WTC11 (cell line): ENCODE measurements at regions of chr2 and their contacts with region 1.

Region 1: DNA sequence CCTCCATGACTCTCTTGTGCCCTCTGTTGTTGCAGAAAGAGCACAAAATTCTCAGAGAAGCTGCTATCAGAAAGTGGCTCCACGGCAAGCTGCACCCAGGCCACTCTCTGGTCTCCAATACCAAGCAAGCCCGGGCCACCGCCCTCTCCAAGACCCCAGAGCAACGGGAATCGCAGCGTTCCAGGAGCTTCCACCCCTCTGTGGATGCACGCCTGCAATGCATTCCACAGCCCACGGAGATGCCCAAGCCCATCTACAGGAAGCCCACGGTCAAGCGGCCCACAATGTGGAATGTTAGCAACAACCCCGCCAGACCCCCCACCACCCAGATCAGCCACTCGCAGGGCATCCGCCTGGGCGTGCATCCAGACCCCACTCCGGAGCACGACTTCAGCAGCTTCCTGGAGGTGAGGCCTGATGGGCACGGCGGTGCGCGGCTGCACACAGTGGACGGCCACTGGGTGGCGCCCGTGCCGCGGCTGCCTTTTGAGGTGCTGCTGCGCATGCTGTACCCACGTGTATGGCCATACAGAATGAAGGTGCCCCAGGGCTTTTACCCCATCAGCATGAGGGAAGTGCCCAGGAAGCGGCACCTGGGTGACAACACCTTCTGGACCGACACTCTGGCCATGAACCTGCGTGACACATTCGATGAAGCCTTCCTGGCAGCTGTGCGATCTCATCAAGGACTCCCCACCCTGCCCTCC is 6.3 kb downstream of the ANKRD53 start:
- DNase-seq: peak; percentile 85
- ATAC-seq: peak; percentile 96
- H3K4me3 Mint-ChIP-seq: peak overlapping the region; percentile 54
- H3K27ac Mint-ChIP-seq: no peak overlapping the region
- H3K4me1 Mint-ChIP-seq: peaks cover 5% of the 10 kb centered on the region
- H3K27me3 Mint-ChIP-seq: peaks cover 14% of the 10 kb centered on the region
- CTCF ChIP-seq: peak; percentile 90

Region 2: GRCh38 chr2:70935468-70936164 is 49.1 kb before region 1 on chr2 and contains the start of gene ATP6V1B1:
- CTCF ChIA-PET with region 1: interaction called, 11 read pairs
- POLR2A ChIA-PET with region 1: no interaction called
- DNase-seq: peak; percentile 53
- ATAC-seq: peak; percentile 20
- H3K4me3 Mint-ChIP-seq: no peak within 1 kb of the TSS
- H3K27ac Mint-ChIP-seq: no peak within 1 kb of the TSS
- H3K4me1 Mint-ChIP-seq: peaks cover 25% of the 10 kb centered on the region
- H3K27me3 Mint-ChIP-seq: peaks cover 48% of the 10 kb centered on the region
- CTCF ChIP-seq: no peak
- total RNA-seq, gene ATP6V1B1: not detected in 3 replicates

Region 3: GRCh38 chr2:71000780-71001591 is 16.3 kb after region 1 on chr2:
- CTCF ChIA-PET with region 1: interaction called, 68 read pairs
- POLR2A ChIA-PET with region 1: no interaction called
- DNase-seq: peak; percentile 77
- ATAC-seq: peak; percentile 72
- H3K4me3 Mint-ChIP-seq: peak overlapping the region; percentile 43
- H3K27ac Mint-ChIP-seq: no peak overlapping the region
- H3K4me1 Mint-ChIP-seq: peaks cover 18% of the 10 kb centered on the region
- H3K27me3 Mint-ChIP-seq: peaks cover 45% of the 10 kb centered on the region
- CTCF ChIP-seq: peak; percentile 87

Region 4: DNA sequence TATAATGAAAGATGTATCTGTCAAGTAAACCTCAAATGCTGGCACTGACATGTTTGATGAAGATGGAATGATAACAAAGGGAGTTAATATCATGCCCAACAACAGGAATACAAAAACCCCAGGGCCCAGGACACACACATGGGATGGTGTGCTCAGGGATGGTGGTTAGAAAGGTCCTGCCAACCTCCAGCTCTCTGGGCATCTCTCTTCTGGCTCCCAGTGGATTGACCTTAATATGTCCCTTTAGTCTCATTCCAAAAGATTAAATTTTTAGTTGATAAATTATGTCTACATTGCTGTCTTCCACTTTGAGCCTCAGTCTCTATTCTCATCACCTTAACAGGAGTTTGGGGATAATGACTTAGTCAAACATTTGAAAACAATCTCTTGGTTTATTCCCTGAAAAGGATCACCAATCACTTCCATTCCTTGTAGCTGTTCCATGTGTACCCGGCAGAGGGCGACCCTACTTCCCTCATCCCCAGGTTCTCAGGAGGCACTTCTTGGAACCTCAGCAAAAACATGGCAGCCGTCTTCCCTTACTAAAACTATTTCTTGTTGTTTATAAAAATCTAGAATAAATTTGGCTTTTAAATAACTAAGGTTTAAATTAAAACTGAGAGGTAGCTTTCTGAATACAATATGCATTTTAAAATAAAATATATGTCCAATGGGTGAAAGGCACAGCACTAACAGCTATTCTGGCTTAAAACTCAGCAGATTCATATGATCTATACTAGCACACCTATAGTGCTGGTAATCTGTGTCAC is 115.7 kb after region 1 on chr2:
- CTCF ChIA-PET with region 1: interaction called, 10 read pairs
- POLR2A ChIA-PET with region 1: no interaction called
- DNase-seq: peak; percentile 72
- ATAC-seq: peak; percentile 63
- H3K4me3 Mint-ChIP-seq: no peak overlapping the region
- H3K27ac Mint-ChIP-seq: no peak overlapping the region
- H3K4me1 Mint-ChIP-seq: peaks cover 29% of the 10 kb centered on the region
- H3K27me3 Mint-ChIP-seq: no peaks in the 10 kb centered on the region
- CTCF ChIP-seq: peak; percentile 59

Region 5: DNA sequence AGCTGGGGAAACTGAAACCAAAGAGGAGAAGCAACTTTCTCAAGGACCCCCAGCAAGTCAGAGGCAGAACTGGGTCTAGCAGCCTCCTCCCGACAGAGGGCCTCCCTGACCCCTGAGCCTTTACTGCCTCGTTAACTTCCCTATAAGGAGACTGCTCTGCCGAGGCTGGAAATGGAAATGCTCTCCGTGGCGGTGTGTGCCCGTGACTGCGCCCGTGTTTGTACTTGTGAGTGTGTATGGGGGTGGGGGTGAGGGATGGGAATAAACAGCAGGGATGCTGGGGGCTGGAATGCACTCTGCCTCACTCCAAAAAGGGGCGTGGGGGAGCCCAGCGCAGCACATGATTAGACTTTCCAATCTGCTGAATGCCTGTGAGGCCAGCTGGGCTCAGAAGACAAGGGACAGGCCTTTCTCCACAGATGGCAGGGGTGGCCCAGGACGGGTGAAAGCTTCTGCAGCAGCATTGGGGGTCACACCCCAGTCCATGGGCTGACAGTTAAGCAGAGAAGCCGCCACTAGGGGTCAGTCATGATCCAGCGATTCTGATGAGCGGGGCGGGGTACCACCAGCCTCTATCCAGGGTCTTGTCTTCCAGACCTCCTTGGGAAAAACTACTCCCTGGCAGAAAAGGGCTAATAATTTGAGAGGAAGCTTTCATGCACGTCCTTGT is 172.5 kb after region 1 on chr2:
- CTCF ChIA-PET with region 1: interaction called, 23 read pairs
- POLR2A ChIA-PET with region 1: no interaction called
- DNase-seq: peak; percentile 91
- ATAC-seq: peak; percentile 89
- H3K4me3 Mint-ChIP-seq: peak overlapping the region; percentile 13; the same call in 1 of the 2 replicates
- H3K27ac Mint-ChIP-seq: no peak overlapping the region
- H3K4me1 Mint-ChIP-seq: peaks cover 14% of the 10 kb centered on the region
- H3K27me3 Mint-ChIP-seq: no peaks in the 10 kb centered on the region; the same call in 1 of the 2 replicates
- CTCF ChIP-seq: peak; percentile 90